ENCODE measurements at regions of chr16 and their contacts with region 1.

Region 1: DNA sequence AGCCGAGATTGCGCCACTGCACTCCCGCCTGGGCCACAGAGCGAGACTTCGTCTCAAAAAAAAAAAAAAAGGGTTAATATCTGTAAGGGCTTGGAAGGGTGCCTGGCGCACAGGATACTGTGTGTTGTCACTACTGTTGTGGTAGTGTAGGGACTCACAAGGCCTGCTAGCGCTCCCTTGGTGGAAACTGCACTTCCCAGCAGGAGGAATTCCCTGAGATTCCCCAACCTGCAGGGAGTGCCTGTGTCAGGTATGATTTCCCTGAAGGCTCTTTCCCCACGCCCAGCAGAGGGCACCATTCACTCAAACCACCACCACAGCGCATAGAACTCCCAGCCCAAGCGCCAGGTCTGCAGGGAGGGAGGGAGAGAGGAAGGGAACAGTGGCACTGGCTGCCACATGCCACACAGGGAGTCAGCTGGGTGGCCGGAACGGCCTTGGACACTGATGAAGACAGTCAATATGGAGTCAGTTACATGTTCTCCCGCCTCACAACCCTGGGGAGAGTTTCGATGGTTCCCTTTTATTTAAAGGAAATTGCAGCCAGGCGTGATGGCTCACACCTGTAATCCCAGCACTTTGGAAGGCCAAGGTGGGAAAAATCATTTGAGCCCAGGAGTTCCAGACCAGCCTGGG is 32.7 kb upstream of the CDH1 start:
- DNase-seq: peak; percentile 48
- ATAC-seq: peak; percentile 58
- H3K4me3 Mint-ChIP-seq: peak overlapping the region; percentile 36
- H3K27ac Mint-ChIP-seq: no peak overlapping the region
- H3K4me1 Mint-ChIP-seq: peaks cover 5% of the 10 kb centered on the region
- H3K27me3 Mint-ChIP-seq: no peaks in the 10 kb centered on the region
- CTCF ChIP-seq: no peak

Region 2: GRCh38 chr16:68719993-68720489 is 15.7 kb after region 1 on chr16:
- CTCF ChIA-PET with region 1: no interaction called
- POLR2A ChIA-PET with region 1: interaction called, 12 read pairs
- intact Hi-C with region 1: no loop called
- DNase-seq: no peak
- ATAC-seq: peak; percentile 92
- H3K4me3 Mint-ChIP-seq: peak overlapping the region; percentile 41
- H3K27ac Mint-ChIP-seq: peak overlapping the region; percentile 85
- H3K4me1 Mint-ChIP-seq: peaks cover 21% of the 10 kb centered on the region
- H3K27me3 Mint-ChIP-seq: no peaks in the 10 kb centered on the region
- CTCF ChIP-seq: no peak

Region 3: GRCh38 chr16:68800257-68800875 is 96.0 kb after region 1 on chr16:
- CTCF ChIA-PET with region 1: interaction called, 7 read pairs
- POLR2A ChIA-PET with region 1: interaction called, 3 read pairs
- intact Hi-C with region 1: loop called (anchors 1 kb)
- DNase-seq: peak; percentile 23
- ATAC-seq: peak; percentile 98
- H3K4me3 Mint-ChIP-seq: no peak overlapping the region
- H3K27ac Mint-ChIP-seq: peak overlapping the region; percentile 24
- H3K4me1 Mint-ChIP-seq: peaks cover 4% of the 10 kb centered on the region
- H3K27me3 Mint-ChIP-seq: peaks cover under 1% of the 10 kb centered on the region
- CTCF ChIP-seq: no peak

Region 4: GRCh38 chr16:69123910-69124309 is 419.6 kb after region 1 on chr16:
- CTCF ChIA-PET with region 1: no interaction called
- POLR2A ChIA-PET with region 1: no interaction called
- intact Hi-C with region 1: loop called (anchors 1 kb)
- DNase-seq: no peak
- ATAC-seq: peak; percentile 69
- H3K4me3 Mint-ChIP-seq: no peak overlapping the region
- H3K27ac Mint-ChIP-seq: no peak overlapping the region
- H3K4me1 Mint-ChIP-seq: peaks cover 13% of the 10 kb centered on the region
- H3K27me3 Mint-ChIP-seq: no peaks in the 10 kb centered on the region
- CTCF ChIP-seq: peak; percentile 26

Measured in activated B cell treated with CpG ODN at 0.5 μM for 24 hours (primary cell).